ENCODE measurements at regions of chr9 and their contacts with region 1.

Region 1: GRCh38 chr9:22954550-22954949 is 507.9 kb downstream of the DMRTA1 start:
- DNase-seq: no peak
- ATAC-seq: no peak
- H3K4me3 ChIP-seq: no peak overlapping the region
- H3K27ac ChIP-seq: no peak overlapping the region
- H3K4me1 ChIP-seq: no peaks in the 10 kb centered on the region
- H3K27me3 ChIP-seq: no peaks in the 10 kb centered on the region
- CTCF ChIP-seq: no peak
- EP300 ChIP-seq: no peak
- POLR2A ChIP-seq: no peak
- RAD21 ChIP-seq: no peak

Region 2: DNA sequence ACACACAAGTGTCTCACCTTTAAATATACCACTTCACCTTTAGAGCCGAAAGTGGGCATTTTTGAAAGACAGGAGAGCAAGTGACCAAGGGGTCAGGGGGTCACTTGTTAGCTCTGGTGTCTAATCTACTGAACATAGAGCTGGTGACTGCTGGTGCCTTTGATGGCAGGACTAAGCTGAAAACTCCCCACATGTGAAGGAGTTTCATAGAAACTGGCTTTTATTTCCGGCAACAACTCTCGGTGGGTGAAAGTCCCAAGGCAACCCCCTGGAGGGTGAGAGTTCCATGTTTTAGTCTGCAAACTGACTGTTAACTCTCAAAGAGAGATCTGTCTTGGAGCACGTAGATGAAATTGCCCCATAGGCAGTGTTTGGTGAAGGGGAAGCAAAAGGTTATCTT is 41.0 kb before region 1 on chr9:
- CTCF ChIA-PET with region 1: no interaction called
- POLR2A ChIA-PET with region 1: no interaction called
- in situ Hi-C with region 1: no loop called
- intact Hi-C with region 1: loop called (anchors 1 kb)
- DNase-seq: no peak
- ATAC-seq: no peak
- H3K4me3 ChIP-seq: no peak overlapping the region
- H3K27ac ChIP-seq: no peak overlapping the region
- H3K4me1 ChIP-seq: no peaks in the 10 kb centered on the region
- H3K27me3 ChIP-seq: no peaks in the 10 kb centered on the region
- CTCF ChIP-seq: no peak
- EP300 ChIP-seq: no peak
- POLR2A ChIP-seq: no peak
- RAD21 ChIP-seq: no peak